Activated CD4-positive, alpha-beta T cell treated with anti-CD3 and anti-CD28 coated beads for 36 hours (primary cell): ENCODE measurements at regions of chrX and their contacts with region 1.

Region 1: DNA sequence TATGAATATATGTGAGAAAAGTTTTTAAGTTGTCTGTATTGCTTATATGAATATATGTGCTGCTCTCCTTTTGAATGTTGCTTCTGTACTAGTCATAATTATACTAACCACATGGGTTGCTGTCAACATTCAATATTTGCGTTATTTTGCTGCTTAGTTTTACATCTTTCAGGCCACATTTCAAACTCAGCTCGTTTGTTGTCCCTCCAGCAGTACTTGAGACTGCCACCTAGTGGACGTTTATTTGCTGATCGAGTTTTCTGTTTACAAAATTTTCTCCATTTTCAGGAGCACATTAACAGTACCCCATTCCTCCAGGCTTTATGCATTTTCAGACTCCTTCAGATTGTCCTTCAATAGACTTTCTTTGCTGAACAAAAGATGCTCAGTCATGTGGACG is 75.8 kb downstream of the NUDT11 start:
- DNase-seq: peak; percentile 30
- ATAC-seq: peak; percentile 49
- H3K4me3 Mint-ChIP-seq: no peak overlapping the region
- H3K27ac Mint-ChIP-seq: no peak overlapping the region
- H3K4me1 Mint-ChIP-seq: peaks cover 9% of the 10 kb centered on the region
- H3K27me3 Mint-ChIP-seq: no peaks in the 10 kb centered on the region

Region 2: GRCh38 chrX:51144852-51145442 is 275.7 kb before region 1 on chrX:
- CTCF ChIA-PET with region 1: interaction called, 5 read pairs
- POLR2A ChIA-PET with region 1: no interaction called
- intact Hi-C with region 1: loop called (anchors 2 to 10 kb)
- DNase-seq: peak; percentile 50
- ATAC-seq: no peak
- H3K4me3 Mint-ChIP-seq: no peak overlapping the region
- H3K27ac Mint-ChIP-seq: no peak overlapping the region
- H3K4me1 Mint-ChIP-seq: no peaks in the 10 kb centered on the region
- H3K27me3 Mint-ChIP-seq: peaks cover 13% of the 10 kb centered on the region

Region 3: DNA sequence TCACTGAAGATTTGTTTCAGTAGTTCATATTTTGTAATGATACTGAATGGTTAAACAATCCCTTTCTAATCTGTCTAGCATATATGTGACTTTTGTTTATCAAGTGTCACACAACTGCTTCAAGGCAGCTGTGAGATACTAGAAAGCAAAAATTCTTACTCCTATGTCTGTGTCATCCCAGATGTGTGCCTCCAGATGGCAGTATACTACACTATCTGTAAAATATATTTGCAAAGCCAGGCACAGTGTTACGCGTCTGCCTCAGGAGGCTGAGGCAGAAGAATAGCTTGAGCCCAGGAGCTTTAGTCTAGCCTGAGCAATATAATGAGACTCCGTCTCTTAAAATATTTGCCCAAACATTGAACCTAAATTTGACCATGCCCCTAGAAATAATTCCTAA is 84.0 kb before region 1 on chrX:
- CTCF ChIA-PET with region 1: interaction called, 61 read pairs
- POLR2A ChIA-PET with region 1: no interaction called
- intact Hi-C with region 1: loop called (anchors 1 kb)
- DNase-seq: peak; percentile 39
- ATAC-seq: peak; percentile 58
- H3K4me3 Mint-ChIP-seq: no peak overlapping the region
- H3K27ac Mint-ChIP-seq: no peak overlapping the region
- H3K4me1 Mint-ChIP-seq: peaks cover 1% of the 10 kb centered on the region
- H3K27me3 Mint-ChIP-seq: peaks cover 3% of the 10 kb centered on the region

Region 4: GRCh38 chrX:51395810-51396728 is 24.5 kb before region 1 on chrX:
- CTCF ChIA-PET with region 1: interaction called, 11 read pairs
- POLR2A ChIA-PET with region 1: no interaction called
- intact Hi-C with region 1: loop called in 1 of 2 experiments (anchors 1 kb)
- DNase-seq: peak; percentile 77
- ATAC-seq: peak; percentile 77
- H3K4me3 Mint-ChIP-seq: peak overlapping the region; percentile 81
- H3K27ac Mint-ChIP-seq: peak overlapping the region; percentile 84
- H3K4me1 Mint-ChIP-seq: peaks cover 44% of the 10 kb centered on the region
- H3K27me3 Mint-ChIP-seq: no peaks in the 10 kb centered on the region